ENCODE measurements at regions of chr18 and their contacts with region 1.

Region 1: DNA sequence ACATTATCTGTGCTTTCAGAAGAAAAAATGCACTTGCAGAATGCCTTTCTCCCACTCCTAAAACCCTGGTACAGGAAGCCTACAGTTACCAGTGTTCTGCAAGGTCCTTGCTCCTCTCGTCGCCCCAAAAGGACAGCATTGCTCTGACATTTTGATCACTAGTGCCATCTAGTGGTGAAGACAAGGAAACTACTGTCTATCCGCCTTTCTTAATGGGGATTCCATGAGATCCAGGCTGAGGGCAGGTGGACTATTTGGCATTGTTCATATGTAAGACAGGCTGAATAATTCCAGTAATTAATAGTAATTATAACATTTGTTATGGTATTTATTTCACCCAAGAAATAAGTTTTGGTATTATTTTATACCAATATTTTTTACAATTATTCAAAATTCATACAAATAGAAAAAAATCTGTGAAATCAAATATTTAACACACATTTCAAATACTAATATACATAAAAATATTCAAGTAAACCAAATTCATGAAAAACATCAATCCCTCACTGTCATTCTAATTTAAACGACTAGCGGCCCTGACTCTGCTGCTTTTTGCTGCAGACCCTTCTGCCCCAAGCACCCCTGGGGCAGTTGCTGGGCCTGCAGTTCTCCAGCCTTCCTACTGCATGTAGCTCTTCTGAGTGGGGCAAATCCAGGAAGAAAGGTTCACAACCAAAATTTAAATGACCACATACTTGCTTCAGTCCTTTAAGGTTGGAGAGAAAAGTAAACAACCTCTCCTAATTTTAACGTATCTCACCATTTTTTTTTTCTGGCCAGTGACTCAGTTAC is 19.0 kb downstream of the TPGS2 start:
- DNase-seq: no peak
- H3K4me3 ChIP-seq: no peak overlapping the region
- H3K27ac ChIP-seq: no peak overlapping the region
- H3K4me1 ChIP-seq: no peaks in the 10 kb centered on the region
- H3K27me3 ChIP-seq: no peaks in the 10 kb centered on the region
- CTCF ChIP-seq: peak in 2 of 3 experiments; percentile 76 to 90; a peak in 3 of 4 replicates
- EP300 ChIP-seq: no peak
- POLR2A ChIP-seq: no peak
- RAD21 ChIP-seq: peak; percentile 67 to 84

Region 2: DNA sequence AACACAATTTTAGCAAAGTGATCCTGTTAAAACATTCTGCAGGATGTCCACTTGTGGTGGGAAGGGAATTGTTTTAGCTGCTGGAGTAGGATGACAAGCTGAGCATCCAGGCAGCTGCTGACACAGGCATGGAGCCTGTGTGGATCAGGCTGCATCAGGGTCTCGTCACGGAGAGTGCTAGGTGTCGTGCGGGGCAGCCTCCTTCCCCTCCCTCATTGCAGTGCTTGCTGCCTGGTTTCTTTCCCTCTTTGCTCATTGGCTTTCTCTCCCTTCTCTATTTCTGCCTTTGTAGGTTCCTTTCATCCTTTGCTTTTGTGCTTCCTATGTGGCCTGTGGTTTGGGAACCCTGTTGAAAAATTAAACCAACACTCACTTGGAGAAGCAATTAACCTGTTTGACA is 153.9 kb before region 1 on chr18:
- CTCF ChIA-PET with region 1: no interaction called
- POLR2A ChIA-PET with region 1: no interaction called
- DNase-seq: no peak
- H3K4me3 ChIP-seq: no peak overlapping the region
- H3K27ac ChIP-seq: no peak overlapping the region
- H3K4me1 ChIP-seq: no peaks in the 10 kb centered on the region
- H3K27me3 ChIP-seq: no peaks in the 10 kb centered on the region
- CTCF ChIP-seq: no peak
- EP300 ChIP-seq: no peak
- POLR2A ChIP-seq: no peak
- RAD21 ChIP-seq: no peak

Region 3: DNA sequence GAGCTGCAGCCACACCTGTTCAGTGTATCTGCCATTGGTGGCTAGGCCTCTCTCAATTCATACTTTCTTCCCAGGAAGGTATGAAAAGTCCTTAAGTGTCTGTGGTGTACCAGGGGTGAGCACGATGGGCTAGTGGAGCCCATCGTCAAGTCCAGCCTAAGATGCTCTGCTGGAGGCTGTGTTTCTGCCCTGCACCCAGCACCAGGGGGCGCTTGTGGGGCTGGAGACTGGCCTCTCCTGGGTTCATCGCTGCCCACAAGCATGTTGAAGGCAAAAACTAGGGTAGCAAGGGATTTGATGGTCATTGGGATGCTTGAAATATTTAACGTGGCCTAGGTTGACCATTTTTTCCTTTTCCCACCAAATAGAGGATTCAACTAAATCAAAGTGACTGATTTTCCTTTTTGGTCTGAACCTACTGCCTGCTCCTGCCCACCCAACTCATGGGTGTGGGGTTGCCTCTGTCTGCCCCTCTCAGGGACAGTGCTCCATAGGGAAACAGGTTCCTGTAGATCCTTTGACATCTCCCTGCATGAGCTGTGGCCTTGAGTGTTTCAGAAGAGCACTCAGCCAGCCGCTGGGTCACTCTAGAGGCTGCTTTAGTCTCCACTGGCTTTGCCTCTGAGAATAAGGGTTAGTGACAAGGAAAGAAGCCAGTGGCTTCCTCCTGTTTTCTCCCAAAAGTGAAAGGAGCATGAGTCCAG is 40.0 kb before region 1 on chr18:
- CTCF ChIA-PET with region 1: interaction called, 17 read pairs
- POLR2A ChIA-PET with region 1: no interaction called
- DNase-seq: peak in 1 of 2 experiments; percentile 90
- H3K4me3 ChIP-seq: no peak overlapping the region
- H3K27ac ChIP-seq: no peak overlapping the region
- H3K4me1 ChIP-seq: no peaks in the 10 kb centered on the region
- H3K27me3 ChIP-seq: no peaks in the 10 kb centered on the region
- CTCF ChIP-seq: peak; percentile 77 to 88 (median 85)
- EP300 ChIP-seq: no peak
- POLR2A ChIP-seq: no peak
- RAD21 ChIP-seq: peak; percentile 66 to 69

Region 4: GRCh38 chr18:36821681-36822080 is 11.9 kb after region 1 on chr18:
- CTCF ChIA-PET with region 1: interaction called, 17 read pairs
- POLR2A ChIA-PET with region 1: interaction called, 3 read pairs
- DNase-seq: no peak
- H3K4me3 ChIP-seq: no peak overlapping the region
- H3K27ac ChIP-seq: no peak overlapping the region
- H3K4me1 ChIP-seq: no peaks in the 10 kb centered on the region
- H3K27me3 ChIP-seq: no peaks in the 10 kb centered on the region
- CTCF ChIP-seq: no peak
- EP300 ChIP-seq: no peak
- POLR2A ChIP-seq: no peak
- RAD21 ChIP-seq: no peak

Measured in H1 (cell line).